Psoas muscle (tissue), 8 donors: ENCODE measurements at regions of chr20 and their contacts with region 1.

Region 1: GRCh38 chr20:17699931-17700657 is at the start of gene BANF2:
- DNase-seq: no peak
- ATAC-seq: no peak
- H3K4me3 ChIP-seq: no peak within 1 kb of the TSS
- H3K27ac ChIP-seq: no peak within 1 kb of the TSS
- H3K4me1 ChIP-seq: no peaks in the 10 kb centered on the region
- H3K27me3 ChIP-seq: no peaks in the 10 kb centered on the region
- CTCF ChIP-seq: no peak
- total RNA-seq, gene BANF2: not detected

Region 2: DNA sequence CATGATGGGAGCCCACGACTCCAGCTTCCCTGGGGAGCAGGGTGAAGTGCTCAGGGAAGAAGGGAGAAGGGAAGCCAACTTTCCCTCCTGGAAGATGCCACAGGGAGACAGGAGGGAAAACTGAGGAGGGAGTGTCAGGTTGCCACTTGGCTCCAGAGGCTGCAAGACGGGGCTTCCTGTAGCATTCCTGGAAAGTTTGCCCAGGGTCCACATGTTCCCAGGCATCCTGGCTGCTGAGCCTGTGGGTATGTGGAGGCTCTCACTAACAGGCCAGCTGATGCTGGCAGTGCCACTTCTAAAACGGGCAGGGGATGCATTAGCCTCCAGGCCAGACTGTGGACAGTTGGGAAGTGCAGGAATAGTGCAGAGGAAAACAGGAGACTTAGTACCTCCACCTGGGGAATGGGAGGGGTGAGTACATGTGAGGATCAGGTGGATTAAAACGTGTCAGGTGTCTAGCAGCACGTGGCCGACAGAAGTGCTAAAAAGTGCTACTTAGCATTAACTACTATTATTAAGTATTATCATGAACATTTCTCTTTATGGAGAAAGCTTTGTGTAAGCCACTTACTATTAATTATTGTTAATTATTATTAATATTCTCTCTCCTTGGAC is 32.9 kb after region 1 on chr20:
- intact Hi-C with region 1: loop called in 1 of 2 experiments (anchors 5 kb)
- DNase-seq: no peak
- ATAC-seq: no peak
- H3K4me3 ChIP-seq: no peak overlapping the region
- H3K27ac ChIP-seq: no peak overlapping the region
- H3K4me1 ChIP-seq: no peaks in the 10 kb centered on the region
- H3K27me3 ChIP-seq: no peaks in the 10 kb centered on the region
- CTCF ChIP-seq: no peak

Region 3: DNA sequence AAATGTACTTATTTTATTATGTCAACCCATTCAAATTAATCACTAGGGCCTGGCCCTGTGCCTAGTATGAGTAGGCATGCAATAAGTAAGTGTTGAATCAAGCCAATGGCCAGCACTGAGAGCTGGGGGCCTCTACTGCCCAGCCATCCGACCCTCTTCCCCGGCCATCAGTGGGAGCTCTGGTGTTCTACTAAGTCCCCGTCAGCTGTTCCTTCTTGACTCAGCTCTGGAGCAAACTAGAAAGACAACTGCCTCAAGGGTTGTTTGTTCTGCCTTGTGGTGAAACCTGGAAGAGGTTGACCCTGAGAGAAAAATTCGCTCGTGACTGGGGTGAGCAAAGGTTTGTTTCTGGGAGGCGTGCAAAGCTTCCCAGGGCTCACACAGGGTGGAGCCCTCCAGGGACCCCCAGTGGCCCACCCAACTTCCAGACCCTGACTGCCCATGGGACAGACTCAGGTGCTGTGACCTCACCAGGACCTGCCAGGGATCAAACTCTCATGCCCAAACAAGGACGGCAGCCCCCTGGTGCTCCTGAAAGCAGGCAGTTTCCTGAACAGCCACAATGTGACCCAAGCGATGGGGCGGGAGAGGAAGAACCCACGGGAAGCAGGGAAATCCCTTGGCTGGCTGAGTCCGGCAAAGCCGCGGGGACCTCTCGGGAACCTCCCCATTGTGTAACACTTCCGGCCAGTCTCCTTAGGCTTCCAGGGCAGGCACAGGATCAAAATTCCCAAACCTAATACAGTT is 50.1 kb after region 1 on chr20:
- intact Hi-C with region 1: no loop called
- DNase-seq: peak; percentile 70 to 87
- ATAC-seq: peak in 3 of 4 donors; percentile 67 to 87 (median 70)
- H3K4me3 ChIP-seq: no peak overlapping the region
- H3K27ac ChIP-seq: peak overlapping the region; percentile 36
- H3K4me1 ChIP-seq: no peaks in the 10 kb centered on the region
- H3K27me3 ChIP-seq: peaks cover 0 to 2% (median 0%) of the 10 kb centered on the region in 3 donors
- CTCF ChIP-seq: no peak

Region 4: GRCh38 chr20:17943343-17943742 is 243.2 kb after region 1 on chr20:
- intact Hi-C with region 1: no loop called
- DNase-seq: no peak
- ATAC-seq: no peak
- H3K4me3 ChIP-seq: no peak overlapping the region
- H3K27ac ChIP-seq: no peak overlapping the region
- H3K4me1 ChIP-seq: peaks cover 9% of the 10 kb centered on the region
- H3K27me3 ChIP-seq: no peaks in the 10 kb centered on the region
- CTCF ChIP-seq: no peak